ENCODE measurements at regions of chr9 and their contacts with region 1.

Region 1: GRCh38 chr9:130805510-130806326 is 29.3 kb upstream of the ABL1 start:
- DNase-seq: no peak
- H3K4me3 ChIP-seq: no peak overlapping the region
- H3K27ac ChIP-seq: no peak overlapping the region
- H3K4me1 ChIP-seq: no peaks in the 10 kb centered on the region
- H3K27me3 ChIP-seq: no peaks in the 10 kb centered on the region
- CTCF ChIP-seq: no peak

Region 2: GRCh38 chr9:130712564-130713285 is 93.0 kb before region 1 on chr9:
- CTCF ChIA-PET with region 1: interaction called, 5 read pairs
- POLR2A ChIA-PET with region 1: interaction called, 23 read pairs
- intact Hi-C with region 1: no loop called
- DNase-seq: peak; percentile 95 to 99
- H3K4me3 ChIP-seq: peak overlapping the region; percentile 99
- H3K27ac ChIP-seq: peak overlapping the region; percentile 85
- H3K4me1 ChIP-seq: peaks cover 22% of the 10 kb centered on the region
- H3K27me3 ChIP-seq: no peaks in the 10 kb centered on the region
- CTCF ChIP-seq: no peak

Measured in PC-9 (cell line).